H1 (cell line): ENCODE measurements at regions of chr5 and their contacts with region 1.

Region 1: GRCh38 chr5:150600616-150601490 is 39.6 kb upstream of the SYNPO start:
- DNase-seq: no peak
- H3K4me3 ChIP-seq: no peak overlapping the region
- H3K27ac ChIP-seq: no peak overlapping the region
- H3K4me1 ChIP-seq: peaks cover 0 to 2% (median 0%) of the 10 kb centered on the region in 4 experiments; a peak in 1 of 7 replicates
- H3K27me3 ChIP-seq: no peaks in the 10 kb centered on the region
- CTCF ChIP-seq: no peak
- EP300 ChIP-seq: no peak
- POLR2A ChIP-seq: no peak
- RAD21 ChIP-seq: no peak

Region 2: GRCh38 chr5:150449517-150450339 is 151.1 kb before region 1 on chr5 and contains the start of gene RPS14:
- CTCF ChIA-PET with region 1: no interaction called
- POLR2A ChIA-PET with region 1: no interaction called
- DNase-seq: peak; percentile 77 to 96
- H3K4me3 ChIP-seq: peak within 1 kb of the TSS; percentile 97 to 100 (median 98)
- H3K27ac ChIP-seq: peak within 1 kb of the TSS; percentile 99
- H3K4me1 ChIP-seq: peaks cover 0 to 15% (median 8%) of the 10 kb centered on the region in 4 experiments; a peak in 6 of 7 replicates
- H3K27me3 ChIP-seq: no peaks in the 10 kb centered on the region
- CTCF ChIP-seq: peak; percentile 78 to 93 (median 85)
- EP300 ChIP-seq: peak in 1 of 2 experiments; percentile 21; a peak in 1 of 3 replicates
- POLR2A ChIP-seq: peak; percentile 90 to 98
- RAD21 ChIP-seq: peak; percentile 33 to 46; a peak in 3 of 4 replicates
- total RNA-seq, gene RPS14: 2,548 and 2,599 TPM in 2 replicates

Region 3: DNA sequence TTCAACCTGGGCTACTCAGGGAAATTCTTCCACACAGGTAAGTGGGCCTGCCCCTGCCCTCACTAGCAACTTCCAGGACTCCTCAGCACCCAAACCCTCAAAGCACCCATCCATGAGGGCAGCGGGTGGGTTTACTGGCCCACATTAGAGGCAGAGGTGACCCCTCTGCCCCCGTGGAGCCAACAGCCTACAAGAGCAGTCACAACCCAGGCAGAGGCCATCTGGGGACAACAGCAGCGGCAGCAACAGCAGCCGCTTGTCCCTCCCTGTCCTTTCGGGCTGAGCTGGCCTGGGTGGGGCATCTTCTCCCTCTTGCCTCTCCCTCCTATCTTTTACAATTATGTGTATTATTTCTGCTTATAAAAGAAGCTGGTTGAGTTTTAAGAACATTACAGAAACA is 67.9 kb before region 1 on chr5:
- CTCF ChIA-PET with region 1: no interaction called
- POLR2A ChIA-PET with region 1: no interaction called
- DNase-seq: no peak
- H3K4me3 ChIP-seq: no peak overlapping the region
- H3K27ac ChIP-seq: no peak overlapping the region
- H3K4me1 ChIP-seq: peaks cover 0 to 6% (median 3%) of the 10 kb centered on the region in 4 experiments; a peak in 5 of 7 replicates
- H3K27me3 ChIP-seq: no peaks in the 10 kb centered on the region
- CTCF ChIP-seq: no peak
- EP300 ChIP-seq: no peak
- POLR2A ChIP-seq: no peak
- RAD21 ChIP-seq: no peak

Region 4: DNA sequence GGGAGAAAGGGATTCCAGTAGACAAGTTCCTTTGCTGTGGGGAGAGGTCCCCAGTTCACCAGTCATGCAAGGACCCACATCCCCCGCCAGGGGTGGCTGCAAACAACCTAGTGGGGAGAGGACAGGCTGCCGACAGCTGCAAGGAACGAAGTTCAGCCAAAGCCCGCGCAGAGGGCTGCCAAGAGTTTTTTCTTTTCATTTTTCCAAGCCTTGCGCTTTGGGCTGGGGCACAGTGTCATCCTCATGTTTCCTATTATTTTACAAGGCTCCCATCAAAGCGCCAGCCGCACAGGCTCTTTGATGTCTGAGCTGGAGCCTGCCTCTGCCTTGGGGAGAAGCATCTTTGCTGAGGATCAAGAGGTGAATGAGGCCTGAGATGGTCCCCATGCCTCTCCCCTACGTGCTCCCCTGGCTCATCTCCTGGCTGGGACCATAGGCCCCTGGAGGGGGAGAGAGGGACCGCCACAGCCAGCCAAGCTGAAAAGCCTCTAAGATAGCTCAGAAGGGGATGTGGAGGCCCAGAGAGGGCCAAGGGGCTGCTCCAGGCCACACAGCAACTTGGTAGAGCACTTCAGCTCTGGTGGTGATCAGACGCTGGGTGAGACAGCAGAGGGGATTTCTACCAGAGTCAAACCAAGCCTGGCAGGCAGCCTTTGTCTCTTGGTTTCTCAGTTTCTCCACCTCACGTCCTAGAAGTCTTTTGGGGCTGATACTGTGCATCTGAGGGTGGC is 10.8 kb before region 1 on chr5:
- CTCF ChIA-PET with region 1: interaction called, 25 read pairs
- POLR2A ChIA-PET with region 1: interaction called, 3 read pairs
- DNase-seq: peak in 1 of 2 experiments; percentile 17
- H3K4me3 ChIP-seq: no peak overlapping the region
- H3K27ac ChIP-seq: no peak overlapping the region
- H3K4me1 ChIP-seq: peaks cover 0 to 7% (median 5%) of the 10 kb centered on the region in 4 experiments; a peak in 6 of 7 replicates
- H3K27me3 ChIP-seq: no peaks in the 10 kb centered on the region
- CTCF ChIP-seq: peak; percentile 61 to 69 (median 63)
- EP300 ChIP-seq: no peak
- POLR2A ChIP-seq: no peak
- RAD21 ChIP-seq: peak; percentile 60 to 70

Region 5: GRCh38 chr5:150675069-150675468 is 74.2 kb after region 1 on chr5:
- CTCF ChIA-PET with region 1: no interaction called
- POLR2A ChIA-PET with region 1: no interaction called
- DNase-seq: no peak
- H3K4me3 ChIP-seq: no peak overlapping the region
- H3K27ac ChIP-seq: no peak overlapping the region
- H3K4me1 ChIP-seq: peaks cover 5 to 21% (median 13%) of the 10 kb centered on the region in 4 experiments
- H3K27me3 ChIP-seq: no peaks in the 10 kb centered on the region
- CTCF ChIP-seq: no peak
- EP300 ChIP-seq: no peak
- POLR2A ChIP-seq: no peak
- RAD21 ChIP-seq: no peak